Gastrocnemius medialis (tissue), 4 donors: ENCODE measurements at regions of chr5 and their contacts with region 1.

Region 1: DNA sequence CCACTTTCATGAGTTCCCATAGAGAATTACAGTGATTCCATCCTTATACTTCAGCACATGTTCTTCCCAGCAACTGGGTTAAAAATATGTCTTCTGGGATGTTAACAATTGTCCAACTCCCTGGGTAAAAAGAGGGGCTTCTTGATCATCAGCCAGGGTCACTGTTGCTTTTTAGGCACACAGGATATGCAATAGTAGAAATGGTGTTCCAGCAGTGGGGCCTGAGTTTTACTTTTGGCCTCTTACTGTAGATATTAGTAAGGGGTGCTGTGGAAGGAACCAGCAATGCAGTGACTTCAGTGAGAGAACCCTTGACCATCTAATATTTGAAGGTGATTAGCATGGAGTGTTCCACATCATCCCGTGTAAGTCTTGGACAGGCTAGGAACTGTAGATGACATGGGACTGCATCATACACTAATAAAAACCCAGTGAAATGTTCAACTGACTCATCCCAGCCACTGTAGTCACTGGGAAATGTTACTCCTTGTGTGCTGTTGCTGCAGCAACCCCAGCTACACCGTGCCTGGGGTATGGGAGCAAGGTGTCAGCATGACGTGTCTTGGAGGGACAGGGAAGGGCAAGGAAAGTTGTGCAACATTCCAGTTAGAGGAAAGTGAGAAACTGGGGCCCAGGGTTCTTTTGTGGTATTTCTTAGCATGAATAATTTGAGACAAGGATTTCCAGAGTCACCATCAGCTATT is 610.9 kb downstream of the RAB3C start:
- DNase-seq: peak; percentile 63 to 84
- ATAC-seq: peak; percentile 80 to 86
- H3K4me3 ChIP-seq: no peak overlapping the region
- H3K27ac ChIP-seq: peak overlapping the region; percentile 70 to 76 (median 71)
- H3K4me1 ChIP-seq: peaks cover 29 to 61% of the 10 kb centered on the region in 2 donors
- H3K27me3 ChIP-seq: no peaks in the 10 kb centered on the region
- CTCF ChIP-seq: no peak
- POLR2A ChIP-seq: no peak

Region 2: DNA sequence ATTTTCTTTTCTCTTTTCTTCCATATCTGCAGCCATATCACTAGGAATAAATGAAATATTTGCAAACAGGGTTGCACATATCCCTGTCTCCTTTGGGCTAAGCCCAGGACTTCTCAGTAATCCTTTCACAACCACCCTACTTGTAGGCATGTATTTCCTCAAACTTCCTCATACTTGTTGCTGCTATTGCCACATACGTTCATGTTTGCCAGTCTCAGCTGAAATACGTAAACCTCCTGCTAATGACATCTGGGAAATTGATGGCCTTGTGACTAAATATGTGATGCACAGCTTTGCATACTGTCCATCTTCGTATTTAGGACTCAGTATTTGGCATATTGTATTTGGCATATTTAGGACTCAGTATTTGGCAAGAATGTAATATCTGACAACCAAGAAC is 958.5 kb before region 1 on chr5:
- in situ Hi-C with region 1: no loop called
- intact Hi-C with region 1: no loop called
- DNase-seq: no peak
- ATAC-seq: peak in 1 of 2 donors; percentile 66
- H3K4me3 ChIP-seq: no peak overlapping the region
- H3K27ac ChIP-seq: no peak overlapping the region
- H3K4me1 ChIP-seq: peaks cover 9 to 12% of the 10 kb centered on the region in 2 donors
- H3K27me3 ChIP-seq: no peaks in the 10 kb centered on the region
- CTCF ChIP-seq: no peak
- POLR2A ChIP-seq: no peak

Region 3: DNA sequence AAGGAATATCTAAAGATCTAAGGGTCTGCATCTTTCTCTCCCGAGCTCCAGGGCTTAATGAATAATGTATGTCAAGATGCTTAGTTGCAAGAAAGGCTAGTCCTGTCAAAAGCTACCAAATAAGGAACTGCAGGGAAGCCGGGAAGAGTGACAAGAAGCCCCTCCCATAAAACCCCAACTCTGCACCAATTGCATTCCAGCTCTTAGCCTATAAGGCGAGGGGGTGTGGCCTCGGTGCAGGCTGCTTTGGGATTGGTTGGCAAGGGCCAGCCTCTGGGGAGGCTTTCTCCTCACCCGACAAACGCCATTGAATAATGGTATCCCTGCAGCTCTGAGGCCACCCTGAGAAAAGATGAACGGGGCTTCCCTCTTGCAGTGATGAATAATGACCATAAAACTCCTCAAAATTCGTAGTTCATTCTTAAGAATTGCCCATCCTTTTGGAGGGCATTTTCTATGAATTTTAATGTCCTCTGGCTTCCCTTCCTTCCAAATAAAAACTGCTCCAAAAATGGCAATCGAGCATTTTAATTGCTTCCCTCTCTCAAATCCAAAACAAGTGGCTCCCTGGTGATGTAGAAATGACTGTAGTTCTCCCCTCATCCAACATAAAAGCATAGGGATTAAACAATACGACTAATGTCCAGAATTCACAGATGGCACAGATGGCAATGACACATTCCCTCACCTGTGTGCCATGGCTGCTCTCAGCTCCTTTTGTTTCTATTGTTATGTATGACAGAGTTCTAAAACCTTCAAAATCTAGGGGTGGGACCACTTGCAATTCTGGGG is 193.8 kb before region 1 on chr5:
- in situ Hi-C with region 1: no loop called
- intact Hi-C with region 1: no loop called
- DNase-seq: no peak
- ATAC-seq: no peak
- H3K4me3 ChIP-seq: no peak overlapping the region
- H3K27ac ChIP-seq: peak overlapping the region in 3 of 4 donors; percentile 65 to 79 (median 71)
- H3K4me1 ChIP-seq: peaks cover 43 to 54% of the 10 kb centered on the region in 2 donors
- H3K27me3 ChIP-seq: no peaks in the 10 kb centered on the region
- CTCF ChIP-seq: no peak
- POLR2A ChIP-seq: no peak

Region 4: DNA sequence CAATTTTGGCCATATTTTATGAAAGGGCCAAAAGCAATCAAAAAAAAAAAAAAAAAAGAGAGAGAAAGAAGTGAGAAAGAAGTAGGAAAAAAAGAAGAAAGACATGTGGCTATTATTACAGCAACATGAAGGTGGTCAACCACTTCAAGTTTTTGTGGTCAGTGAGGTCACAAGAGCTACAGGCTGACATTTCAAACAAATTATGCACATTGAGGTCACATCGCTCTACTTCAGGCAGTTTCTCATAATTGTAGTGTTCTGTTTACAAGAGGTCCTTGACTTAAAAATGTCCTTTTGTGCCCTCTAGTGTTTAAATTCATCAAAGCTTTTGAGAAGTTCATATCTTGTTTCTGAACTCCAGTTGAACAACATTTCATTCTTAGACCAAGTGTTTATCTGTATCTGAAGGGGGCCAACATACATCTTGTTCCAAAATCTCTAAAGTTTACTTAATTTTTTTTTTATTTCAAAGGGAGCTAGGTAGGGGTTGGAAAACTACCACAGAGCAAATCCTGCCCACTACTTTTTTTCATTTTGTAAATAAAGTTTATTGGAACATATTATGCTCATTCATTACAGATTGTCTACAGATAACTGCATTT is 186.7 kb after region 1 on chr5:
- in situ Hi-C with region 1: loop called (anchors 5 to 10 kb)
- intact Hi-C with region 1: loop called (anchors 2 kb)
- DNase-seq: no peak
- ATAC-seq: peak; percentile 67 to 74
- H3K4me3 ChIP-seq: no peak overlapping the region
- H3K27ac ChIP-seq: peak overlapping the region in 1 of 4 donors; percentile 45
- H3K4me1 ChIP-seq: no peaks in the 10 kb centered on the region
- H3K27me3 ChIP-seq: no peaks in the 10 kb centered on the region
- CTCF ChIP-seq: peak; percentile 38 to 58 (median 49)
- POLR2A ChIP-seq: no peak

Region 5: DNA sequence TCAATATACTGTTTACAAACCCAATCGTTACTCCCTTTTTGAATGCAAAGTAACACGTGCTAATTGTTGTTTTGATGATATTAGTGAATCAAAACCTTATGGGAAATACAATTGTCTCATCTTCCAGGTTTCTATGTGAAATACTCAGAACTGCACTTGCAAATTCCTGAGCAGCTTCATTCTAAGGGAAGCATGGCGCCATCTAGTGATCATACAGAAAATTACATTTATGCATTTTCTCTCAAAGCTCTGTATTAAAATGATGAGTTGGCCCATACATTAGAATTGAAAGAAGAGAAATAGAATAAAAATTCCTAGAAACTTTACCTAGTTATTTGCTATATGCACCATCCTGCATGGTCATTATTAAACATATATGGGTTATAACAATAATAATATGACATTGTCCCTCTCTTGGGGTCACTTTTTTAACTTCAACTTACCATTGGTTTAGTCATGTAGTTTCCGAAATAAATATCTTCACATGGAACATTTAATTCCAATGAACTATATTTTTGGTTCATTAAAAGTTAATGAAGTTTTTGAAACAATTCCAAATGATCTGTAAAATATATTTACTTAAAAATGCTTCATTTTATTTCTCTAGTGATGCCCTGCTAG is 479.8 kb after region 1 on chr5:
- in situ Hi-C with region 1: loop called (anchors 5 to 25 kb)
- intact Hi-C with region 1: loop called (anchors 5 kb)
- DNase-seq: no peak
- ATAC-seq: peak; percentile 43 to 60
- H3K4me3 ChIP-seq: no peak overlapping the region
- H3K27ac ChIP-seq: no peak overlapping the region
- H3K4me1 ChIP-seq: peaks cover 6% of the 10 kb centered on the region in 2 donors
- H3K27me3 ChIP-seq: no peaks in the 10 kb centered on the region
- CTCF ChIP-seq: peak; percentile 73 to 82 (median 77)
- POLR2A ChIP-seq: no peak